Heart left ventricle (tissue), 16 donors: ENCODE measurements at regions of chr12 and their contacts with region 1.

Region 1: DNA sequence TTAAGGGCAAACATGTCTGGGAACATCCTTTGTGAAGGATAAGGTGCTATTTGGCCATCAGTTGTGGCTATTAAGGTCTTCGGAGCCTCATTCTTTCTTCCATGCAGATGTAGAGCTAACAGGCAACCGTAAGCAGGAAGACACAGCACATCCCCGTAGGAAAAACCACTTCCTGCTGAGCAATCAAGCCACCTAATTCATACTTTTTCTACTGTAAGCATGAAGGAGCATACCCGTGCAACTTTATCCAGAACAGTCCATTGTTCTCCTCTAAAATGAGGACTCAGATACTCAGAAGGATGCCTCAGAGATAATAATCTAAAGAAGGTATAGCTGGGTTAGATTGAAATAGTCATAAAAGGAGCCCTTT is 232.0 kb downstream of the PPM1H start:
- DNase-seq: no peak
- ATAC-seq: peak in 2 of 4 donors; percentile 13 to 55
- H3K4me3 ChIP-seq: no peak overlapping the region
- H3K27ac ChIP-seq: peak overlapping the region in 11 of 12 donors; percentile 39 to 87 (median 66)
- H3K4me1 ChIP-seq: peaks cover 5 to 48% (median 27%) of the 10 kb centered on the region in 12 donors
- H3K27me3 ChIP-seq: no peaks in the 10 kb centered on the region
- CTCF ChIP-seq: no peak
- POLR2A ChIP-seq: no peak

Region 2: GRCh38 chr12:62760779-62761178 is 57.8 kb after region 1 on chr12:
- intact Hi-C with region 1: loop called in 1 of 10 experiments (anchors 5 kb)
- DNase-seq: no peak
- ATAC-seq: peak in 1 of 4 donors; percentile 57
- H3K4me3 ChIP-seq: no peak overlapping the region
- H3K27ac ChIP-seq: peak overlapping the region in 2 of 12 donors; percentile 17 to 30
- H3K4me1 ChIP-seq: peaks cover 0 to 37% (median 20%) of the 10 kb centered on the region in 12 donors
- H3K27me3 ChIP-seq: no peaks in the 10 kb centered on the region
- CTCF ChIP-seq: no peak
- POLR2A ChIP-seq: no peak